AG04449 (cell line): ENCODE measurements at regions of chr5 and their contacts with region 1.

Region 1: GRCh38 chr5:170747851-170748250 is 35.7 kb upstream of the GABRP start:
- DNase-seq: no peak
- H3K4me3 ChIP-seq: no peak overlapping the region
- CTCF ChIP-seq: peak; percentile 36

Region 2: DNA sequence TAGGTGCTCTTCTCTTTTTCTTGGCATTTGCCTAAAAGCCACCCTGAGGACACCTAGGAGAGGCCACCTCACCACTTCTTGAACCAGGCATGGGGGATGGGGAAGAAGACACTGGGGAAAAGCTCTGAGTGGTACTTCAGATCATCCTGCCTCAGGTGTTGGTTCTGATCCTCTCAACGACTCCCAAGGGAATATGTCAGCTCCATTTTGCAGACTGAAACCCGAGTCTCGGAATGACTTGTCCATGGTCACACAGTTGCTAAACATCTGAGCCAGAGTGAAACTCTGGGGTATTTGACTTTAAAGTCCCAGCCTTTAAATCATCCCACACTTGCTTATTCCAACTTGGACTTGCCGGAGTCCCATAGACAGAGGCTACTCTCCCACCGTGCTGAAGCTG is 84.9 kb before region 1 on chr5:
- CTCF ChIA-PET with region 1: no interaction called
- POLR2A ChIA-PET with region 1: no interaction called
- DNase-seq: no peak
- H3K4me3 ChIP-seq: no peak overlapping the region
- CTCF ChIP-seq: no peak

Region 3: DNA sequence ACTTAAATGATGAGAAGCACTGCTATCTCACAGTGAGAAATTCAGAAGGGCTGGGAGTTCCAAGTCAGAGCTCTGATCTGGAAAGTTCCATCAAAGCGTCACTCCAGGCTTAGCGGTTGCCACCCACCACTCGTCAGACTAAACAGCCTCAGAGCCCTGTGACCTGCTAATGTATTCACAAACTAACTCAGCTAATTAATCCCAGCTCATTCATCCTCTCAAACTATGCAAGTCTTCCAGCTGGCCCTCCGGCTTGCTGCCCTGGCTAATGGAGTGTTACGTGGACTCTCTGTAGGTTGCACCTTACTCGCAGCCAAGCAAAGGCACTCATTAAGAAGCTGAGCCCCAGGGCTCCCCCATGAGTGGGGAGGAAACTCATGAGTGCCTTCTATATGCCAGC is 46.5 kb before region 1 on chr5:
- CTCF ChIA-PET with region 1: no interaction called
- POLR2A ChIA-PET with region 1: no interaction called
- DNase-seq: no peak
- H3K4me3 ChIP-seq: no peak overlapping the region
- CTCF ChIP-seq: no peak

Region 4: DNA sequence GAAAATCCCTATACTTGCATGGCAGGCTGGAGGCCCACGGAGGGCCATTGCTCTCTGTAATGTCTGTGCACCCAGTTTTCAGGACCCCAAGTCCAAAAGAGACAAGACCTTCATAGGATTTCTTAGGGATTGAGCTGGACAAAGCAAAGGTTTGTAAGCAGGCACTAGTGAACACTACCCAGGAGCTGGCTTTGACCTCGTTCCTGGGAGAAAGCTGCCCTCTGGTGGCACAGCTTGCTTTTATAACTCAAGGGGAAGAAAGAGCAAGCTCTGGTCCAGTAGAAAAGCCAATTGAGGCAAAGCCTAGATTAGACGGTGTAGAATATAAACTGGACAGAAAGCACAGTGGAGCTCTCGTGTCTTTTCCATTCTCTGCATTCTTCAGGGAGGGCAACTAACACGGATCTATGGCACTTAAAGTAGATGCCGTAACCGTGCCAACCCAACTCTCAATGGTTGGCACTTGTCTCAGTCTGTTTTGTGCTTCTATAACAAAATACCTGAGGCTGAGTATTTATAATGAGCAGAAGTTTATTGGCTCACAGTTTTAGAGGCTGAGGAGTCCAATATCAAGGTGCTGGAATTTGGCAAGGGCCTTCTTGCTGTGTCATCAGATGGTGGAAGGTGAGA is 43.6 kb after region 1 on chr5:
- CTCF ChIA-PET with region 1: interaction called, 227 read pairs
- POLR2A ChIA-PET with region 1: no interaction called
- DNase-seq: no peak
- H3K4me3 ChIP-seq: no peak overlapping the region
- CTCF ChIP-seq: peak; percentile 48

Region 5: DNA sequence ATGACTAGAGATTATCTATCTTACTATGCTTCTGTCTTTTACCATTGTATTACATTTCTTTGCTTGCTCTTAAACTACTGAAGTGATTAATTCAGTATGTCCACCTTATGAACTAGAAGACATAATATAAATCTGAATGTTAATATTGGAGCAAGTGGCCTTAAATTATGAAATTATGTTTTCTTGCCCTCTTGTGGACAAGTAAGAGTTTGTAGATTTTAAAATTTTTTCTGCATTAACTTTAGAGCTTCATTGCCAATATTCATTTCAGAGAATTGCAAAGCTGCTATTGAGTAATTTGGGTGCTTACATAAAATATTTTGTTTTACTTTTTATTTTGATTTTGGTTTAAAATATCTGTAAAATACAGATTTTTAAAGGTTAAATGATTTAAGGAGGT is 169.3 kb after region 1 on chr5:
- CTCF ChIA-PET with region 1: interaction called, 10 read pairs
- POLR2A ChIA-PET with region 1: no interaction called
- DNase-seq: no peak
- H3K4me3 ChIP-seq: no peak overlapping the region
- CTCF ChIP-seq: no peak

Region 6: GRCh38 chr5:171336521-171337209 is 588.8 kb after region 1 on chr5:
- CTCF ChIA-PET with region 1: interaction called, 28 read pairs
- POLR2A ChIA-PET with region 1: no interaction called
- DNase-seq: peak; percentile 5
- H3K4me3 ChIP-seq: peak overlapping the region; percentile 61
- CTCF ChIP-seq: peak; percentile 81

Region 7: DNA sequence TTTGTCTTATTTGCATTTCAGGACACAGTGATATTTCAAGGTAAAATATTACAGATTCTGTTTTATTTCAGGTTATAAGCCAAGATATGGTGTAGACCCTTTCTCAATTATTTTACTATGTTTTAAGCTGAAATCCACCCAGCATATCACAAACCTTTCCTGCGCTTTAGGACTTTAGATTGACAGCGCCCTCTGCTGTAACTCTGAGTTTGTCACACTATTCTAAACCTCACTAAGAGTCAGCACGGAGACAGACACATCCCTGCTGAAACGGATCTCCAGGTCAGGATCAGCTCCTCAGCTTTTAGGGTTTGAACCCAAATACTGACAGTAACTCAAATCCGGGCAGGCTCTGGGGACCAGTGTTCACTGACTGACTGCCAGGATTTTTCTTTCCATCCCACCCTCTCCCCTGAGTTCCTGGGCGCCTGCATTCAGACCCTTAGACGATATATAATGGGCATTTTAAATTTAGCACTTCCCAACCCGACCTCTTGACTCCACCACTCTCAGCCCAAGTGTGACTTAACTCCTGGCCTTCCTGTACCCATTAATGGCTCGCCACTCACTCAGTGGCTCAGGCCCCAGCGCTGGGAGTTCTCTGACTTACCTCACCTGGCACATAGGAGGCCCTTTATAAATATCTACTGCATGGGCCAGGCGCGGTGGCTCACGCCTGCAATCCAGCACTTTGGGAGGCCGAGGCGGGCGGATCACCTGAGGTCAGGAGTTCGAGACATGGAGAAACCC is 594.7 kb after region 1 on chr5:
- CTCF ChIA-PET with region 1: interaction called, 28 read pairs
- POLR2A ChIA-PET with region 1: no interaction called
- DNase-seq: peak; percentile 7
- H3K4me3 ChIP-seq: no peak overlapping the region
- CTCF ChIP-seq: peak; percentile 67